Activated naive CD4-positive, alpha-beta T cell treated with anti-CD3 and anti-CD28 coated beads, Interleukin-2, amount 10 ng/mL, durations not matched to agents 7 days and 5 days (primary cell): ENCODE measurements at regions of chr13 and their contacts with region 1.

Region 1: DNA sequence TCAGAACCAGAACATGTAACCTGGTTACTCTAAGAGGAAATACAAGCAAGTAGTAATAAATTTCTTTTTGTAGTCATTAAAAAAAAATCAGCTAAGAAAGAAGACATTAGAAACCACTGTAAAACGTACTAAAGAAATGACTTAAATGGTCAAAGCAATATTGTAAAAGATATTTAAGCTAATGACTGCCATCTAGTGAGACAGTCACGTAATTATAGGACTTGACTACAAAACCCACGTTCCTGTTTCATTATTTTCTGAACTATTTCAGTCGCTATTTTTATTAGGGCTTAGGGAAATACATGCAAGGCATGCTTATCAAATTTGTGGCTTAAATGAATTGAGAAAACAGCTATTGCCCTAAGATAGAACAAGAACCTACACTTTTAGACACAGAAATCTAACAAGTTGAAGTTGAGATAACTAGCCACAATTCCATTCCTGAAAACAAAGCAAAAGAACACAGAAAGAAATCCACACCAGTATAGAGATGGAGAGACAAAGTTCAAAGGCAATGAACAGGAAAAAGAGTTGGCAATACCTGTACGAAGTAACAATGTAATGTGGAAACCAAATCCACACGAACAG is 17.9 kb downstream of the ALG5 start:
- DNase-seq: no peak
- H3K4me3 Mint-ChIP-seq: no peak overlapping the region
- H3K27ac Mint-ChIP-seq: peak overlapping the region; percentile 28
- H3K4me1 Mint-ChIP-seq: peaks cover 3% of the 10 kb centered on the region
- H3K27me3 Mint-ChIP-seq: no peaks in the 10 kb centered on the region

Region 2: GRCh38 chr13:36848199-36848982 is 132.9 kb before region 1 on chr13:
- CTCF ChIA-PET with region 1: interaction called, 11 read pairs
- DNase-seq: peak; percentile 32
- H3K4me3 Mint-ChIP-seq: no peak overlapping the region
- H3K27ac Mint-ChIP-seq: no peak overlapping the region
- H3K4me1 Mint-ChIP-seq: no peaks in the 10 kb centered on the region
- H3K27me3 Mint-ChIP-seq: peaks cover 10% of the 10 kb centered on the region

Region 3: DNA sequence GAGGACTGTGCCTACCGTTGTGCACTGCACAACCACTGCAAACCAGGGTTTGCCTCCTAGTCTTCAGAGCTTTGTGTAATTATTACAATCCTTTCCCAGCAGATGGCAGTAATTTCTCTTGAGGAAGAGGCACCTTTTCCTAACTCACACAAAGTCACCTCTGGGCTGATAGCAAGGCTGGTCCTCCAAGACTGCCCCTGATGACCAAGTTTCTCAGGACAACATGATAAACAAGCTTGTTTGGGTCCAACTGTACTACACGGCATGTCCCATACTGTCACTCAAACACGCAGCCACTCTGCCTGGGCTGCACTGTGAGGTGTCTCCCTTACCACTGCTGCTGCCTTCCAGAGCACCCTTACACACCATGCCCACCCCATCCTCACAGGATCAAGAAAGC is 123.0 kb before region 1 on chr13:
- CTCF ChIA-PET with region 1: interaction called, 45 read pairs
- DNase-seq: no peak
- H3K4me3 Mint-ChIP-seq: no peak overlapping the region
- H3K27ac Mint-ChIP-seq: peak overlapping the region; percentile 28
- H3K4me1 Mint-ChIP-seq: peaks cover 13% of the 10 kb centered on the region
- H3K27me3 Mint-ChIP-seq: peaks cover 24% of the 10 kb centered on the region

Region 4: DNA sequence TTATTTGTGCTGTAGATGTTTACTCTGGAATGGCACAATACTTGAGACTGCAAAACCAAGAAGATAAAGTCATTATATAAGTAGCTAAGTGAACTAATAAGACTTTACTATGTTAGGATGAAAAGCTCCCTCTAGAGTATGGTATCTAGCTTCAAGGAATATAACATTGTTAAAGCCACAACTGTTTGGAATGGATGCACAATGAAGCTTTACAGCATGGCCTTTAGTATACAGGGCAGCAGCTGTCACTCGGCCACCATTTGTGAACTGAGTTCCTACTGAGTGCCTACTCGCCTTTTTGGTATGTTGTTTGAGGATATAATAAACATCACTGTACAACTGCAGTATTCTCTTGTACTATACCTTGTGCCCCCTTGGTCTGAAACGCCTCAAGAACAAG is 11.1 kb after region 1 on chr13:
- CTCF ChIA-PET with region 1: interaction called, 20 read pairs
- DNase-seq: no peak
- H3K4me3 Mint-ChIP-seq: no peak overlapping the region
- H3K27ac Mint-ChIP-seq: no peak overlapping the region
- H3K4me1 Mint-ChIP-seq: peaks cover 14% of the 10 kb centered on the region
- H3K27me3 Mint-ChIP-seq: no peaks in the 10 kb centered on the region

Region 5: DNA sequence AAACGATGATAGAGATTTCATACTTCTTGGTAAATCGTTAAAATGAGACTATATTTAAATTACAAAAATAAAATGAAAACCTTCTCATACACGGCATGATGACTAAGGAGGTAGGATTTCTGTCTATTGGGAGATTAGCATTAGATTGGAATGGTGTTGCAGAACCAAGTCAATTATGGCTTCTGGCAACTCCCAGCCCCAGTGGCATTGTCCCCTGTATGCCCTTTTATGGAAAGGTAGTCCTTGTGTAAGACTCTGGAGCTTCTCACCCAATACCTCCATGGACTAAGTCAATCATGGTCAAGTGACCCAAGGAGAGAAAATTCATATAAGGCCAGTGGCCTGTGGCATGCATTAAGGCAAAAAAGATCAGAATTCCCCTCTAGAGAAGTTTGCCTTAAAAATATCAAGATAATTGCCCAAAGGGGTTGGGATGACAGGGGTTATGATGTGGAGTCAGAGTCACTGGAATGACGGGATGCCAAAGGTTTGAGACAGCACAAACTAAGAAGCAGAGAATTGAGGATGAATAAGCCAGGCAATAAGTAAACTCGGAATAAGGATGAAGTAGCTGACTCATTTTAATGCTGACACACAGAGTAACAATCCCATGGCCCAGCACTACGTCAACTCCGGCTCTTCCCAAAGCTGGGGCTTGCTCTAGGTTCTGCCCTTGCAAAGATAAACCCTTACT is 675.1 kb after region 1 on chr13:
- CTCF ChIA-PET with region 1: no interaction called
- DNase-seq: no peak
- H3K4me3 Mint-ChIP-seq: no peak overlapping the region
- H3K27ac Mint-ChIP-seq: no peak overlapping the region
- H3K4me1 Mint-ChIP-seq: no peaks in the 10 kb centered on the region
- H3K27me3 Mint-ChIP-seq: no peaks in the 10 kb centered on the region